Activated naive CD4-positive, alpha-beta T cell treated with anti-CD3 and anti-CD28 coated beads, Interleukin-2, amount 10 ng/mL, durations not matched to agents 7 days and 5 days (primary cell): ENCODE measurements at regions of chr6 and their contacts with region 1.

Region 1: GRCh38 chr6:32952817-32953739 is at the start of gene HLA-DMA:
- DNase-seq: peak; percentile 86
- H3K4me3 Mint-ChIP-seq: peak within 1 kb of the TSS; percentile 68
- H3K27ac Mint-ChIP-seq: peak within 1 kb of the TSS; percentile 75
- H3K4me1 Mint-ChIP-seq: peaks cover 52% of the 10 kb centered on the region
- H3K27me3 Mint-ChIP-seq: no peaks in the 10 kb centered on the region

Region 2: GRCh38 chr6:32885698-32886286 is 67.3 kb before region 1 on chr6:
- CTCF ChIA-PET with region 1: interaction called, 16 read pairs
- DNase-seq: no peak
- H3K4me3 Mint-ChIP-seq: no peak overlapping the region
- H3K27ac Mint-ChIP-seq: no peak overlapping the region
- H3K4me1 Mint-ChIP-seq: no peaks in the 10 kb centered on the region
- H3K27me3 Mint-ChIP-seq: peaks cover 23% of the 10 kb centered on the region

Region 3: DNA sequence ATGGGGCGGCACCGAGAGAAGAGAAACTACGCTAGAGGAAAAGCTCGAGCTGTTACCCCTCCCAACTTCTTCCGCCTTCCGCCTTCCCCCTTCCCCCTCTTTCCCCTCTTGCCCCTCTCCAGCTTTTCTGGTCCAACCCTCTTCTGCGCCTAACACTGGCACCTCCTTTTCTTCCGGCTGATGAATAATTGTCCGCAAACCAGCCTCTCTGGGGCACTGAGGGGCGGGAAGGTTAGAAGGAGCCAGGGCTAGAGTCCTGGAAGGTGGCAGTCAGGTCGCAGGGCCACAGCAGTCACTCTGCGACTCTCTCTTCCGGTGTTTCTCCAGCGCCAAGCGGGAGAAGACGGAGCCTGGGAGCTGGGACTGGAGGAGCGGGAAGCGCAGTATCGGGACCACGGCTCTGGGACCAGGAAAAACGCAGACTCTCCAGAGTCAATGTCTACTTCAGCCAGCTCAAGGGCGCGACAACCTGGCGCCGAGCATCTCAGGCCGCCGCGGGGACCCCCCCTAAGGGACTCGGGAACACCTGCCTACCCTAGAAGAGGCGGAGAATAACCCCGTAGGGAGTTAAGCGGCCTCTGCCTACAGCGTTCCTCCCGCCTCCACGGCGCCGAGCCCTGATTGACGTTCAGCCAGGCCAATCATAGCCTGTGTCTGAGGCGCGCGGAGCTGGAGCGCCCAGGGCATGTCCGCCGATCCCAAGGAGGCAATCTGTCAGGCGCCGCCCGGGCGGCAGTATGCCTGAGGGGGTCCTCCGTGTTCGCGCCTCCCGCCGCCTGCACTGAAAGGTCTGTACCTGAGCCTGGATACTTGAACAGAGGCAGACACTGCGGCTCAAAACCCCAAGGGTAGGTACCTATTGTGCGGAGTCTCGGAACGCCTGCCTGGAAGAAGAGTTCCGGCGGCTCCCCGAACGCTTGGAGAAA is 58.7 kb before region 1 on chr6:
- CTCF ChIA-PET with region 1: interaction called, 17 read pairs
- DNase-seq: peak; percentile 96
- H3K4me3 Mint-ChIP-seq: peak overlapping the region; percentile 99
- H3K27ac Mint-ChIP-seq: peak overlapping the region; percentile 91
- H3K4me1 Mint-ChIP-seq: peaks cover 46% of the 10 kb centered on the region
- H3K27me3 Mint-ChIP-seq: peaks cover 12% of the 10 kb centered on the region

Region 4: GRCh38 chr6:32940656-32941213 is 12.3 kb before region 1 on chr6 and contains the start of gene HLA-DMB:
- CTCF ChIA-PET with region 1: interaction called, 160 read pairs
- DNase-seq: peak; percentile 64
- H3K4me3 Mint-ChIP-seq: peak within 1 kb of the TSS; percentile 83
- H3K27ac Mint-ChIP-seq: peak within 1 kb of the TSS; percentile 97
- H3K4me1 Mint-ChIP-seq: peaks cover 66% of the 10 kb centered on the region
- H3K27me3 Mint-ChIP-seq: peaks cover 6% of the 10 kb centered on the region

Region 5: DNA sequence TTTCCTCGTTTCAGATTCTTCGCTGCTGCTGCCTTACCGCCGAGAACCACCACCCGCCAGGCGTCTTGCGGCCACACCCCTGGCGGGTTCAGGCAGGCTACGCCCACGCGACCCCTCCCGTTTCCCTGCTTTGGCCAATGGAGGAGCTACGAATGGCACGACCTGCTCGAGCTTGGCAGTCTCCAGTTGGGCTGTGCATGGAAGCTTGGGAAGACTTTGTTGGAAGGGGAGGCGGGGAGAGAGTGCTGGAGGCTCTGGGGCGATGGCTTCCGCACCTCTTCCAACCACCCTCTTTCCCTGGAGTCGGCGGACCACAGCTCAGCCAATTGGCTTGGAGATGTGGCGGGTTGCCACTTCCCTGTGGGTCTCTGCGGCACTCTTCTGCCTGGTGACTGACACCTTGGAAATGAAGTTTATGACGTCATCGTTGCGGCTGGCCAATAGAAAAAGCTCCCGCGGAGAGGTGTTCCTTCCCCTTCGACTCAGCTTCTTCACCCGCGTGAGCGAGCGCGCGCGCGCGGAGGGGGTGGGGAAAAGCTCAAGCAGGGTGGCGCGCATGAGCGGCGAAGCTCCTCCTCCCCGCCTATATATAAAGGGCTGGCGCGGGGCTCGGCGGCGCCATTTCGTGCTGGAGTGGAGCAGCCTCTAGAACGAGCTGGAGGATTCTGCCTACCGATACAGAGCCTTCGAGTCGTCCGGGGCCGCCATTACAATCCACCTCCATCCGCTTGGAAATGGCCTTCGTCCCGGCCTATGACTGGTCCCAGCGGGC is 18.7 kb after region 1 on chr6:
- CTCF ChIA-PET with region 1: interaction called, 240 read pairs
- DNase-seq: peak; percentile 99
- H3K4me3 Mint-ChIP-seq: peak overlapping the region; percentile 85
- H3K27ac Mint-ChIP-seq: peak overlapping the region; percentile 97
- H3K4me1 Mint-ChIP-seq: peaks cover 25% of the 10 kb centered on the region
- H3K27me3 Mint-ChIP-seq: peaks cover 10% of the 10 kb centered on the region